ENCODE measurements at regions of chr3 and their contacts with region 1.

Region 1: DNA sequence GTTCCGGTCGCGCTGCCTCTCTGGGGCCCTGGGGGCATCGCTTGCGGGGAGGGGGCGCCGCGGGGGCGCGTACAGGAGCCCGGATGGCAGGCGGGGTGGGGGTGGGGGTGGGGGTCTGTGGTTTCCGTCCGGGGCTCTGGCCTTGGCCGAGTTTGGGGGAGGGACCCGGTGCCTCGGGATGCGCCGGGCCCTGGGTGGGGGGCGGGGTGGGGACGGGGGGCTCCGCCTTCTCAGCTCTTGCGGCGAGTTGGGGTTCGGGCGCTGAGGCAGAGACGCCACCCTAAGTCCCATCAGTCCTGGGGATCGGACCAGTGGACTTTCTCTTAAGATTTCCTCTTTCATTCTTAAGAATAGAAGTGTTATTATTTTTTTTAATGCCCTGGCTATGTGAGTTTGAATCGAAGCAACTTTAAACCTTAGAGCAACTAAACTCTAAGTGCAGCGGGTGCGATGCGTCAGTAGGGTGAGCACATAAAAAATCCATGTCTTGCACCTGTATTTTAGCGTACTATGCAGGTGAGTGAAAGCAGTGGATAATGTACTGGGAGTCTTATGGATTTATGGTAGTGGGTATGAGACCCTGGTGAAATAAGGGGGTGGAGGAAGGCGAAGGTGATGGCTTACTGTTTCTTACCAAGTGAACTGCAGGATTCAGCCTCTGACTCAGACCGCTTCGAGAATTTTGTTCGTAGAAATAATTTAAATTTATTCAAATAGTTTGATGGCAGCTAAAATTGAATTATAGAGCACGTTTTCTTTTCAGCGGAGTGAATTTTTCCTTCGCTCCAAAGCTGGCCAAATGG is 762 bp downstream of the CTNNB1 start:
- DNase-seq: peak; percentile 37
- H3K4me3 ChIP-seq: peak overlapping the region; percentile 84
- H3K27ac ChIP-seq: peak overlapping the region; percentile 95
- H3K4me1 ChIP-seq: peaks cover 66% of the 10 kb centered on the region
- H3K27me3 ChIP-seq: no peaks in the 10 kb centered on the region
- CTCF ChIP-seq: no peak

Region 2: GRCh38 chr3:40971191-40972168 is 228.6 kb before region 1 on chr3:
- intact Hi-C with region 1: loop called (anchors 10 kb)
- DNase-seq: peak; percentile 49
- H3K4me3 ChIP-seq: no peak overlapping the region
- H3K27ac ChIP-seq: peak overlapping the region; percentile 81
- H3K4me1 ChIP-seq: peaks cover 64% of the 10 kb centered on the region
- H3K27me3 ChIP-seq: no peaks in the 10 kb centered on the region
- CTCF ChIP-seq: peak; percentile 10

Region 3: GRCh38 chr3:41419809-41420208 is 219.7 kb after region 1 on chr3:
- intact Hi-C with region 1: no loop called
- DNase-seq: no peak
- H3K4me3 ChIP-seq: no peak overlapping the region
- H3K27ac ChIP-seq: no peak overlapping the region
- H3K4me1 ChIP-seq: no peaks in the 10 kb centered on the region
- H3K27me3 ChIP-seq: no peaks in the 10 kb centered on the region
- CTCF ChIP-seq: no peak

Measured in left ventricle myocardium inferior (tissue), 1 donor.